Activated CD4-positive, alpha-beta T cell treated with anti-CD3 and anti-CD28 coated beads for 36 hours (primary cell): ENCODE measurements at regions of chr7 and their contacts with region 1.

Region 1: GRCh38 chr7:66740302-66740979 is at the start of gene RABGEF1:
- DNase-seq: peak; percentile 98
- ATAC-seq: peak; percentile 89
- H3K4me3 Mint-ChIP-seq: peak within 1 kb of the TSS; percentile 98
- H3K27ac Mint-ChIP-seq: peak within 1 kb of the TSS; percentile 91
- H3K4me1 Mint-ChIP-seq: peaks cover 34% of the 10 kb centered on the region
- H3K27me3 Mint-ChIP-seq: no peaks in the 10 kb centered on the region
- total RNA-seq, gene RABGEF1: 19.3 to 22.5 TPM

Region 2: GRCh38 chr7:66075590-66076461 is 664.6 kb before region 1 on chr7 and contains the start of gene ASL:
- CTCF ChIA-PET with region 1: no interaction called
- POLR2A ChIA-PET with region 1: no interaction called
- intact Hi-C with region 1: loop called in 1 of 2 experiments (anchors 1 kb)
- DNase-seq: peak; percentile 94
- ATAC-seq: peak; percentile 99
- H3K4me3 Mint-ChIP-seq: peak within 1 kb of the TSS; percentile 63
- H3K27ac Mint-ChIP-seq: no peak within 1 kb of the TSS
- H3K4me1 Mint-ChIP-seq: peaks cover 15% of the 10 kb centered on the region
- H3K27me3 Mint-ChIP-seq: no peaks in the 10 kb centered on the region
- total RNA-seq, gene ASL: 12.7 to 18.5 TPM

Region 3: DNA sequence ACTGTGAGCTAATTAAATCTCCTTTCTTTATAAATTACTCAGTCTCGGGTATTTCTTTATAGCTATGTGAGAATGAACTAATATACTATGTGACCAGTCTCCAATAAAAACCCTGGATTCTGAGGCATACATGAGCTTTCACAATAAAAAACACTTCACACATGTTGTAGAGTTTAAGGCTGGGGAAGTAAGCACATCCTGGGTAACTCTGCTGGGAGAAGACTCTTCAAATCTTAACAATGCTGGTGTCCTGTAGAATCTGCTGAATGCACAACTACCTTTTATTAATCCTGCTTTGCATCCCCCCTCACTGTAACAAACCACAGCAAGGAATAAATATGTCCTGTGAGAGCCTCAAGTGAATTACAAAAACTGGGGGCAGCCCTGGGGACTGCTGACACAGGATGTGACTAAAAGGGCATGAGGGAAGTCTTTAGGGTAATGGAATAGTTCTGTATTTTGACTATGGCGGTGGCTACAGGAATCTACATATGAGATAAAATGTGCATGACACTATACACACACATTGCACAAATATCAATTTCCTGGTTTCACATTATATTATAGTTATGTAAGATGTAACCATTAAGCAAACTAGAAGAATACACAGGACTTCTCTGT is 156.8 kb before region 1 on chr7:
- CTCF ChIA-PET with region 1: no interaction called
- POLR2A ChIA-PET with region 1: no interaction called
- intact Hi-C with region 1: no loop called
- DNase-seq: no peak
- ATAC-seq: peak; percentile 60
- H3K4me3 Mint-ChIP-seq: no peak overlapping the region
- H3K27ac Mint-ChIP-seq: peak overlapping the region; percentile 56
- H3K4me1 Mint-ChIP-seq: peaks cover 63% of the 10 kb centered on the region
- H3K27me3 Mint-ChIP-seq: no peaks in the 10 kb centered on the region

Region 4: GRCh38 chr7:66628361-66629140 is 111.9 kb before region 1 on chr7 and contains the start of gene KCTD7:
- CTCF ChIA-PET with region 1: no interaction called
- POLR2A ChIA-PET with region 1: no interaction called
- intact Hi-C with region 1: loop called in 1 of 2 experiments (anchors 1 kb)
- DNase-seq: peak; percentile 98
- ATAC-seq: peak; percentile 94
- H3K4me3 Mint-ChIP-seq: peak within 1 kb of the TSS; percentile 82
- H3K27ac Mint-ChIP-seq: peak within 1 kb of the TSS; percentile 86
- H3K4me1 Mint-ChIP-seq: peaks cover 45% of the 10 kb centered on the region
- H3K27me3 Mint-ChIP-seq: peaks cover 2% of the 10 kb centered on the region
- total RNA-seq, gene KCTD7: 7.8 TPM

Region 5: DNA sequence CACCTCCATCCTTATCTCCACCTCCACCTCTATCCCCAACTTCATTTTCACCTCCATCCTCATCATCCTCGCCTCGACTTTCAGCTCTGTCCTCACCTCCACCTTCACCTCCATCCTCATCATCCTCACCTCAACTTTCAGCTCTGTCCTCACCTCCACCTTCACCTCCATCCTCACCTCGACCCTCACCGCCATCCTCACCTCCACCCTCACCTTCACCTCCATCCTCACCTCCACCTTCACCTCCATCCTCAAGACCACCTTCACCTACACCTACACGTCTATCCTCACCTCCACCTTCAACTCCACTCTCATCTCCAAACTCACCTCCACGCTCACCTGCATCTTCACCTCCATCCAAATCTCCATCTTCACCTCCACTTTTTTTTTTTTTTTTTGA is 11.9 kb before region 1 on chr7:
- CTCF ChIA-PET with region 1: no interaction called
- POLR2A ChIA-PET with region 1: no interaction called
- intact Hi-C with region 1: no loop called
- DNase-seq: no peak
- ATAC-seq: no peak
- H3K4me3 Mint-ChIP-seq: no peak overlapping the region
- H3K27ac Mint-ChIP-seq: no peak overlapping the region
- H3K4me1 Mint-ChIP-seq: no peaks in the 10 kb centered on the region
- H3K27me3 Mint-ChIP-seq: no peaks in the 10 kb centered on the region

Region 6: GRCh38 chr7:66844552-66845378 is 104.3 kb after region 1 on chr7:
- CTCF ChIA-PET with region 1: no interaction called
- POLR2A ChIA-PET with region 1: no interaction called
- intact Hi-C with region 1: loop called in 1 of 2 experiments (anchors 1 kb)
- DNase-seq: peak; percentile 99
- ATAC-seq: peak; percentile 94
- H3K4me3 Mint-ChIP-seq: peak overlapping the region; percentile 95
- H3K27ac Mint-ChIP-seq: peak overlapping the region; percentile 99
- H3K4me1 Mint-ChIP-seq: peaks cover 24% of the 10 kb centered on the region
- H3K27me3 Mint-ChIP-seq: no peaks in the 10 kb centered on the region

Region 7: GRCh38 chr7:67302113-67303039 is 561.9 kb after region 1 on chr7:
- CTCF ChIA-PET with region 1: no interaction called
- POLR2A ChIA-PET with region 1: no interaction called
- intact Hi-C with region 1: loop called in 1 of 2 experiments (anchors 2 kb)
- DNase-seq: peak; percentile 99
- ATAC-seq: peak; percentile 88
- H3K4me3 Mint-ChIP-seq: peak overlapping the region; percentile 88
- H3K27ac Mint-ChIP-seq: peak overlapping the region; percentile 92
- H3K4me1 Mint-ChIP-seq: peaks cover 18% of the 10 kb centered on the region
- H3K27me3 Mint-ChIP-seq: no peaks in the 10 kb centered on the region